ENCODE measurements at regions of chrX and their contacts with region 1.

Region 1: DNA sequence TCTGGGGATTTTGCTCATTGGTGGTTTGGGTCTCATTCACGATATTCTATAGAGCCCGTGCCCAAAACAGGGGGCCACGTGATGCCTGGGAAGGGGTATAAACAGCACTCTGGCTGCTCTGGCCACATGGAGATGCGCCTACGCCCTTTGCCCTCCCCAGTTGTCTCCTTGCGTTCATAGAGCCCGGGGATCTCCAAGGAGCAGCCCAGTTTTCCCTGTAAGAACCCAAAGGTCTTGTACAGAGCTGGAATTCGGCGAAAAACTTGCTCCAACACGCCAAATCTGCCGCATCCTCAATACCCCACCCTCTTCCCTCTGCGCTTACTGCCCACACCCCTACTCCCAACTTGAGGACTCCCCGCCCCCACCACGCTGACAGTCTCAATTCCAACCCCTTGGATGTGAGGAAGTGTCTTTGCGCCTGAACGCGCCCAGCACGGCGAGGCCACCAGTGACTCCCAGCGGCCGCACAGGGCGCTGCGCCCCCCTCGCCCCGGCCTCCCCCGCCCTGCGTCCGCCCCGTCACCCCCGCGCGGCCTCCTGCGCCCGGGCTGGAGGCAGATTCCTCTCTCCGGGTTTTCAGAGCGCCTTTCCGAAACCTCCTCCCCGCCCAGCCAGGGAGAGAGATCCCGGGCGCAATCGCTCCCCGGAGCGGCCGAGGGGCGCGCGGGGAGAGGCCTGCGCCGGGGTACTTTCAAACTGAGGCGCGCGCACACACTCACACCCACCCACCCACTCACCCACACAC is at the start of gene NHS:
- DNase-seq: peak; percentile 50
- H3K4me3 ChIP-seq: peak within 1 kb of the TSS; percentile 38 to 44
- H3K27ac ChIP-seq: peak within 1 kb of the TSS; percentile 58 to 67
- H3K4me1 ChIP-seq: no peaks in the 10 kb centered on the region
- H3K27me3 ChIP-seq: no peaks in the 10 kb centered on the region
- CTCF ChIP-seq: peak in 3 of 4 experiments; percentile 27 to 40 (median 30)
- POLR2A ChIP-seq: peak; percentile 20
- total RNA-seq, gene NHS: 4.8 to 17.7 TPM

Region 2: DNA sequence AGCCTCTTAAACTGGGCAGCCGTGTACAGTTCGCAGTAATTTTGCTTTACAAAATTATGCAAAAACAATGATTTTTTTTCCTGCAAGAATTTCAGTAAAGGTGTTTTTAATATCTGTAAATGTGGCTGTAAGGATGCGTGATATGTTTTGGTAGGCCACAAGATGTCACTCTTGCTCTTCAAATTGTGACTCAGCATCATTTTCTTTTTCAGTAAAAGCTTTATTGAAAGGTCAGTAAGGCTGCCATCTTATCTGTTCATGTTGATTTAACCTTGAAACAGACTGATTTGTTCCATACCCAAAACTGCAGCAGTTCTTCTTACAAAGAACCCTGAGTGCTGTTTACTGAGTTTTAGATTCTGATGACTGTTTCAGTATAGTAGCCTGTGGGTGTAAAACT is 548.6 kb before region 1 on chrX:
- intact Hi-C with region 1: loop called (anchors 10 kb)
- DNase-seq: no peak
- H3K4me3 ChIP-seq: no peak overlapping the region
- H3K27ac ChIP-seq: no peak overlapping the region
- H3K4me1 ChIP-seq: no peaks in the 10 kb centered on the region
- H3K27me3 ChIP-seq: no peaks in the 10 kb centered on the region
- CTCF ChIP-seq: peak; percentile 19 to 54 (median 38)
- POLR2A ChIP-seq: no peak

Region 3: GRCh38 chrX:17242470-17242869 is 132.3 kb before region 1 on chrX:
- intact Hi-C with region 1: loop called (anchors 5 kb)
- DNase-seq: peak; percentile 34
- H3K4me3 ChIP-seq: no peak overlapping the region
- H3K27ac ChIP-seq: no peak overlapping the region
- H3K4me1 ChIP-seq: no peaks in the 10 kb centered on the region
- H3K27me3 ChIP-seq: no peaks in the 10 kb centered on the region
- CTCF ChIP-seq: peak; percentile 42 to 69 (median 62)
- POLR2A ChIP-seq: no peak

Region 4: DNA sequence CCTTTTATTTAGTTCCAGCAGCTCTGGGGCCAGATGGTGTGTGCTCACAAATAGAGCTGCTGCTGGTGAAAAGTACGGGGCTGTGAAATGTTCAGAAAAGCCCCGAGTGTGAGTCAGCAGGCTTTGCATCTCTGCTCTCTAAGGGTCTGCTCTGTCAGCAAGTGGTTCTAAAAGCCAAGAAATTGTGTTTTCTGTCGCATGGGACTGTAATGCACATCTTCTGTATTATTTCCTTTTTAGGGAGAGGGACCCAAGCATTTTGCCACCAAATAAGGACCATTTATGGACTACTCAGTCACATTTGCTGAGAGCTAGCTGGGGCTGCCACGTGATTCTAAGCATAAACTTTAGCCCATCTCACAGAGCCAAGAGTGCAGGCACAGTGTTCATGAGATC is 82.7 kb before region 1 on chrX:
- intact Hi-C with region 1: loop called (anchors 5 kb)
- DNase-seq: no peak
- H3K4me3 ChIP-seq: no peak overlapping the region
- H3K27ac ChIP-seq: peak overlapping the region in 1 of 2 donors; percentile 35
- H3K4me1 ChIP-seq: no peaks in the 10 kb centered on the region
- H3K27me3 ChIP-seq: no peaks in the 10 kb centered on the region
- CTCF ChIP-seq: no peak
- POLR2A ChIP-seq: no peak

Region 5: GRCh38 chrX:17519358-17519757 is 144.6 kb after region 1 on chrX:
- intact Hi-C with region 1: loop called (anchors 1 kb)
- DNase-seq: no peak
- H3K4me3 ChIP-seq: no peak overlapping the region
- H3K27ac ChIP-seq: no peak overlapping the region
- H3K4me1 ChIP-seq: no peaks in the 10 kb centered on the region
- H3K27me3 ChIP-seq: no peaks in the 10 kb centered on the region
- CTCF ChIP-seq: no peak
- POLR2A ChIP-seq: no peak

Region 6: GRCh38 chrX:17590892-17591740 is 216.3 kb after region 1 on chrX:
- intact Hi-C with region 1: loop called (anchors 2 kb)
- DNase-seq: peak; percentile 26
- H3K4me3 ChIP-seq: no peak overlapping the region
- H3K27ac ChIP-seq: no peak overlapping the region
- H3K4me1 ChIP-seq: no peaks in the 10 kb centered on the region
- H3K27me3 ChIP-seq: no peaks in the 10 kb centered on the region
- CTCF ChIP-seq: peak in 3 of 4 experiments; percentile 39 to 62 (median 60)
- POLR2A ChIP-seq: no peak

Region 7: GRCh38 chrX:17642891-17643290 is 268.1 kb after region 1 on chrX:
- intact Hi-C with region 1: no loop called
- DNase-seq: no peak
- H3K4me3 ChIP-seq: no peak overlapping the region
- H3K27ac ChIP-seq: no peak overlapping the region
- H3K4me1 ChIP-seq: no peaks in the 10 kb centered on the region
- H3K27me3 ChIP-seq: no peaks in the 10 kb centered on the region
- CTCF ChIP-seq: no peak
- POLR2A ChIP-seq: no peak

Region 8: DNA sequence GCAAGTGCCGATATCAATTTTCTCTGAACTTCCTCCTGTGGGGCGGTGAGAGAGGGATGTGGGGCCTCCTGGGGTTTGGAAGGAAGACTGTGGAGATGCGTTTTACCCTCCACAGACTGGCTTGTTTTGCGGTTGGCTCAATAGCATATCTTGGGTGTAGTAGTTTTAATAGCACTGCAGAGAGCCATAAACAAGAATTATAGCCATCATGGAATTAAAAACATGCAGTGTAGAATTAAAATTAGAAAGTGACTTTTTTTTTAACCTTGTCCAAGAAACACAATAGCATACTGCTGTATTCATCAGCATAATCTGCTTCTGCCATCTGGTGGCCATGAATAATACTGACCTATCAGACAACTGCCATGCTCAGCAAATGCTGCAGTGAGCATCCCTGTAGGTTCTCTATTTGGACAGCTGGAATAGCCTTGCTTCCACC is 315.2 kb after region 1 on chrX:
- intact Hi-C with region 1: loop called (anchors 5 kb)
- DNase-seq: peak; percentile 56
- H3K4me3 ChIP-seq: no peak overlapping the region
- H3K27ac ChIP-seq: no peak overlapping the region
- H3K4me1 ChIP-seq: no peaks in the 10 kb centered on the region
- H3K27me3 ChIP-seq: no peaks in the 10 kb centered on the region
- CTCF ChIP-seq: peak in 3 of 4 experiments; percentile 48 to 78 (median 65)
- POLR2A ChIP-seq: no peak